GM13977 (cell line): ENCODE measurements at regions of chr2 and their contacts with region 1.

Region 1: DNA sequence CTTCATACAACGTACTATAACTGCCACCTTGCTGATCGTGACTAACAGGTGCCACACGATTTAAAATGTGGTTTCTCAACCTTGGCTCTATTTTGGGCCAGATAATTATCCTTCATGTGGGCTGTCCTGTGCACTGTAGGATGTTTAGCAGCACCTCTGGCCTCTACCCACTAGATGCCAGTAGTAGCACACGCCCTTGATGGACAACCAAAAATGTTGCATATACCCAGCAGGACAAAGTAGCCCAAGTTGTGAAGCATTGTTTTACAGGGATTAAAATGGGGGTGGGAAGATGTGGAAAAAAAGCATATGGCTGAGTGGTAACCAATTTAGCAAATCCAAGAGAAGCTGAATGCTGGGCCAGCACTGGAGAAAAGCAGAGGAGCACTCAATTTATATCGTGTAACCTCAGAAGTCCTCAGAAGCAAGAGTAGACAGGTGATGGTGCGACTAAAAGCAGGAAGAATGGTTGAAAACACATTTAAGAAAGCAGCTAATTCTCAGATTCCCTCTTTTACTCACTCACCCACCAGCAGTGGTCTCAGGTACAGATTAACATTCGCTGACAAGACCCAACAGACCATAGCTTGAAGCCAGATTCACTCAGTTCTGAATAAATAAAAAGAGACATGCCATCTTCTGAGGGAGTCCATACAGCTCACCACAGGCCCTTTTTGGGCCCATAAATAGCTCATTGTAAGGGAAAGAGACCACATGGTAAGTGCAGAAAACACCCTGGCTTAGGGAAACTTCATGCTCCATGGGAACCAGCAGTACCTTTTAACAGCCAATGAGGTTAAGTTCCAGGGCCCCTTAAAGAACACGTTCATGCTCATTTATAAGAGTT is 50.6 kb downstream of the RAPH1 start:
- DNase-seq: peak; percentile 31
- CTCF ChIP-seq: peak; percentile 73

Region 2: GRCh38 chr2:203071148-203071547 is 413.3 kb before region 1 on chr2:
- in situ Hi-C with region 1: no loop called
- DNase-seq: no peak
- CTCF ChIP-seq: no peak

Region 3: DNA sequence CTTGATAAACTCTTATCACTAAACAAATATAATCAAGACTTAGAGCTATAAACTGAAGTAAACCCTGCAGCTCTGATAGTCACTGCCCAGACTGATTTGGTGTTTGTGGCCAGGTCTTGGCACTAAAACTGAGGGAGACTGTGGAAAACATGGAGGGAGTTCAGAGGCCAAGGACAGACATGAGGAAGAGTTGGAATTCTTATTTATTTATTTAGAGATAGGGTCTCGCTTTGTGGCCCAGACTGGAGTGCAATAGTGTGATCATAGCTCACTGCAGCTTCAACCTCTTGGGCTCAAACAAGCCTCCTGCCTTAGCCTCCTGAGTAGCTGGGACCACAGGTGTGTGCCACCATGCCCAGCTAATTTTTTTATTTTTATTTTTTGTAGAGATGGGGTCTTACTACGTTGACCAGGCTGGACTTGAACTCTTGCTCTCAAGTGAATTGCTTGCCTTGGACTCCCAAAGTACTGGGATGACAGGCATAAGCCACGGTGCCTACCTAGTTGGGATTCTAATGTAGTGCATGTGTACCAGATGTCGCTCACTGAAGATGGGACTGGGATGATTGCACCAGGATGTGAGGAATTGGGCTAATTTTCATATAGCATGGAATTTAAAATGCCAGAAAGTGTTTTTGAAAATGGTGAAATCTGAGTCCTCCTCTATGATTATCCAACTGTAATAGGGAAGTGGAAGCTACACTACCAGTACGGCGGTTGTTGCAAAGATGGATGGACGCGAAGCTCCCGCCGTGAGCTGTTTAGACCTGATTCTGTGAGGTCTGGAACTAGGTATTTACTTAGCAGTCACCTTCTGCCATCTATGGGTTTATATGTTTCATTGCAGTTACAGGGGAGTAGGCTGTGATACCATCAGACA is 330.4 kb after region 1 on chr2:
- in situ Hi-C with region 1: loop called (anchors 5 kb)
- DNase-seq: peak; percentile 72
- CTCF ChIP-seq: peak; percentile 67

Region 4: DNA sequence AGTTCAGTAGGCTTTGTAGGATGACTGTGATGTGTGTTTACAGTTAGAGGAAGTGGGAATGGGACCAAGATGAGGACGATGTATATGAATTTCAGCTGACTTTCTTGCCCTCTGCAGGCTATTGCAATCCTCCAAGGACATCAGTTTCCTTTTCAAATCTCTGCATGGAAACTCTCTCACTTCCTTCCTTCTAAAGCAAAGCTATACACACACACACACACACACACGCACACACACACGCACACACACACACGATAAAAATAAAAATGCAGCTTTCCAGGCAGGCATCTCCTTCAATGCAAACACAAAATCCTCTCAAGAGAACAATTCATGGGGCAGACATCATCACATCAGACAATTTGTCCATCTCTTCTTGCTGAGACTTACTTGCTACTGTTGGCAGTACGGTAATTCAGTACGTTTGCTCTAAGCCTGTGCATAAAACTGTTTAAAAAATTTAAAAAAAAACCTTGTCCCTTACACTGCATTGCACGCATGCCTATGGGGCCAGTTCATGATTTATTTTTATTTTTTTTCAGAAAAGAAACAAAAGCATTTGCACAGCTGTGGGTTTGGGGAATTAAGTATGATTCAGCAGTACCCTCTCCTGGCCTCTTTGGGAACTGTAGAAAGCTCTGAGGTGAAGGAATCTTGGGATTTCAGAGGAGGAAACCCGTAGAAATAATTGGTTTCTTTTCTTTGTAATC is 424.9 kb after region 1 on chr2:
- in situ Hi-C with region 1: loop called (anchors 25 kb)
- DNase-seq: no peak
- CTCF ChIP-seq: peak; percentile 51